Vagina (tissue), 2 donors: ENCODE measurements at regions of chr2 and their contacts with region 1.

Region 1: GRCh38 chr2:181780047-181780651 is 99.8 kb upstream of the NEUROD1 start:
- DNase-seq: no peak
- H3K4me3 ChIP-seq: no peak overlapping the region
- H3K27ac ChIP-seq: no peak overlapping the region
- H3K4me1 ChIP-seq: peaks cover 41% of the 10 kb centered on the region
- H3K27me3 ChIP-seq: no peaks in the 10 kb centered on the region
- CTCF ChIP-seq: no peak
- POLR2A ChIP-seq: no peak

Region 2: DNA sequence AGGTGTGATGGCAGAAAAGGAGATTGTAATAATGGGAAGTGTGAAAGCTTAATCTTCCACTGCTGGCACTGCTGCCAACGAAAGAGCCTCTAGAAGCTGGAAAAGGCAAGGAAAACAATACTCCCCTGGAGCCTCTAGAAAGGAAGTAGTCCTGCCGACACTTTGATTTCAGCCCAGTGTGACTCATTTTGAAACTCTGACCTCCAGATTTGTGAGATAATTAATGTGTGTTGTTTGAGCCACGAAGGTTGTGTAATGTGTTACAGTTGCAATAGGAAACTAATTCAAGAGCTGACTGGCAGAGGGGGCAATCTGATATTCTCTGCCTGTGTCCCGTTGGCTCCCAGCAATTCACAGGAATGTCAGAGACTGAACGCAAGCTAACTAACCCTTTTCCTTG is 1018.9 kb before region 1 on chr2:
- intact Hi-C with region 1: loop called (anchors 5 kb)
- DNase-seq: no peak
- H3K4me3 ChIP-seq: no peak overlapping the region
- H3K27ac ChIP-seq: no peak overlapping the region
- H3K4me1 ChIP-seq: no peaks in the 10 kb centered on the region
- H3K27me3 ChIP-seq: no peaks in the 10 kb centered on the region
- CTCF ChIP-seq: no peak
- POLR2A ChIP-seq: no peak

Region 3: DNA sequence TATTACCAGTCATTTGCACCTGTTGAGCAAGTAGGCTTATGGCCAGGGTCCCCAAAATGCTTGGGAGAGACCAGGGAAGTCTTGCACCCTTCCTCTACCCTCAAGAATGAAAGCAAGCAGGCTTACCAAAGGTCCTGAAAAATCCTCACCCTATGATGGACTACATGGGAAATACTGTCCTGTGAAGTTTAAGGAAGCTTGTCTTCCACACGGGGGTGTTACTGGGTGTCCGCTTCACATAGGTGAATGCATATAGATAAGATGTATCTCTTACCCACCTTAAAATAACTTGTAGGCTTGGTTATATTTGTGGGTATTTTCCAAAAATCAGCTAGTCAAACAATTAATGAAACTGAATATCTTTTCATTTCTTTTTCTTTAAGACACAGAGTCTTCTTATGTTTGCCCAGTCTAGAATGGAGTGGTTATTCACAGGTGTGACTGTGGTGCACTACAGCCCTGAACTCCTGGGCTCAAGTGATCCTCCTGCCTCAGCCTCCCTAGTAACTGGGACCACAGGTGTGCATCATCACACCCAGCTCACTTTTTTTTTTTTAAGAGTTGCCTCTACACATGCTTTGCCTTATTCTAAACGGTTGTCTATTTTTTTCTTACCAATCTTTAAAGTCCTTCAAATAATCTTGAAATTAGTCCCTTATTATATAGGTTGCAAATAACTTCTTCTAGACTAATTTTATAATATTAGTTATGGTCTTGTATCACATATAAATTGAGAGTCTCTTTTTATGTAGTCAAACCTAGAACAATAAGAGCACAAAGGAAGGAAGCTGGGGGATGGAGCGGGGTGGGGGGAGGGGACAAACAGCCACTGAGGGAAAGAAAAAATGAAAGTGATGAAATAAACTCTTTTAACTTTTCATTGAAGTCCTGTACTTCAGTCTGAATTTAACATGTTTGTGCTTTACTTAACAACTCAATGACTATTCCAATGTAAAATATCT is 172.2 kb before region 1 on chr2:
- intact Hi-C with region 1: no loop called
- DNase-seq: no peak
- H3K4me3 ChIP-seq: no peak overlapping the region
- H3K27ac ChIP-seq: no peak overlapping the region
- H3K4me1 ChIP-seq: no peaks in the 10 kb centered on the region
- H3K27me3 ChIP-seq: no peaks in the 10 kb centered on the region
- CTCF ChIP-seq: no peak
- POLR2A ChIP-seq: no peak

Region 4: DNA sequence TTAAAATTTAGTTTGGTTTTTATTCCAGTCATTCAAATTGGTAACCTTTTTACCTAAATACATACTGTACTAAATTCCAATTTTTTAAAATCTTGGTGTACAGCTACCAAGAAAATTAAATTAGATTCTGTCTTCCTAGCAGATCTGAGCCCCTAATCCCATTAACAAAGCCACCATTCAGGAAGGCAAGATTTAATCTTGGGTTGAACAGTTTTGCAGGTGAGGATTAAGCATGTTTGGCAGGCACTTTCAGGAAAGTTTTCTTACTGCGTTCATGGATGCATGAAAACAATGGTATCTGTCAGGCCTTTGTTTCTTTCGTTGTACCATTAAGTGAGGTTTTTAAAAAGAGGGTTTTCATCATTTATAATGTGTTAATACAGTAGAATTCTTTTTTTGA is 144.2 kb after region 1 on chr2:
- intact Hi-C with region 1: no loop called
- DNase-seq: no peak
- H3K4me3 ChIP-seq: no peak overlapping the region
- H3K27ac ChIP-seq: no peak overlapping the region
- H3K4me1 ChIP-seq: peaks cover 17% of the 10 kb centered on the region
- H3K27me3 ChIP-seq: no peaks in the 10 kb centered on the region
- CTCF ChIP-seq: no peak
- POLR2A ChIP-seq: no peak

Region 5: DNA sequence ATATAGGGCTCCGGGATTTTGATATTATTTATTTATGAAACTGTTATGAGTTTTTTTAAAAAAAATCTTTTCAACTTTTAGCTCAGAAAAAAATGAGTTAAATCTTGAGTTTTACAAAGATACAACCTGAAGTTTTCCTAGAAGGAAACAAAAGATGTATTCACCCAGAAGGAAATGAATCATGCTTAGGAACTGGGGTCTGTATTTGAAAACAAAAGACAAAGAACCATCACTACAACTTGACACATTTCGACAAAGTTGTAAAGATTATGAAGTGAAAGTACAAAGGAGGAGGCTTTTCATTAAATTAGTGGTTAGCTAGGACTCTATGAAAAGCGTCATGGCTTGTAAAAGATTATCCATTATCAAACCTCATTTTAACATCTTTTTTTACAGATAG is 503.4 kb after region 1 on chr2:
- intact Hi-C with region 1: no loop called
- DNase-seq: no peak
- H3K4me3 ChIP-seq: no peak overlapping the region
- H3K27ac ChIP-seq: no peak overlapping the region
- H3K4me1 ChIP-seq: no peaks in the 10 kb centered on the region
- H3K27me3 ChIP-seq: no peaks in the 10 kb centered on the region
- CTCF ChIP-seq: no peak
- POLR2A ChIP-seq: no peak